A549 (cell line): ENCODE measurements at regions of chr10 and their contacts with region 1.

Region 1: DNA sequence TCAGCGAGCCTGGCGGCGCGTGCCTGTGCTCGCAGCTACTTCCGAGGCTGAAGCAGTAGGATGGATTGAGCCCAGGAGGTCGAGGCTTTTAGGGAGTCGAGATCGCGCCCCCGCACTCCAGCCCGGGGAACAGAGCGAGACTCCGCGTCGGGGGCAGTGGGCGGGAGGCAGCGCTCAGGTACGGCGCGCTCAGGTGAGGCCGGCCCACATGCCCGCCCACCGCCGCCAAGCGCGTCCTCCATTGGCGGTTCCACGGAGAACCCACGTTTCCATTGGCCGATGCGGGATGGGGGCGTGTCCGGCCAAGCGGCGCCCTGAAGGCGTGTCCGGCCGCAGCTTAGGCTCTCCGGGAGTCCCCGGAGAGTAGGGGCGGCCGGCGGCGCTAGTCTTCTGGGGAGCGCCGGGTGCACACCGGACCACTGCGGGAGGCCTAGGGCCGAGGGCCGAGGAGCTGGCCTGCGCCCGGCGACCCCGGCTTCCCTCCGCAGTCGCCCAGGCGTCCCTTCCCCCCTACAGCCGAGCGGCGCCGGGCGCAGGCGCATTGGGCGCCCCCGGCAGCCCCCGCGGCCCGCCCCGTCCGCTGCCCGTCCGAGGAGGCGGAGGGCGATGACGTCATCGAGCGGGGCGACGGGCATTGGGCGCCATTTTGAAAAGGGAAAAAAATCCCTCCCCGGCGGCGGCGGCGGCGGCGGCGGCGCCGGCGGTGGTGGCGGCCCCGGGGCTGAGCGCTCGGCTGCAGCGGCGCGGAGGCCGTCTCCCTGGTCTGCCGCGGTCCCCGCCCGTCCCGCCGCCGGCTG is at the start of gene PPP2R2D:
- DNase-seq: peak; percentile 92 to 93
- ATAC-seq: peak; percentile 89 to 97
- H3K4me3 ChIP-seq: peak within 1 kb of the TSS; percentile 98
- H3K27ac ChIP-seq: peak within 1 kb of the TSS; percentile 97 to 98
- H3K4me1 ChIP-seq: peaks cover 38% of the 10 kb centered on the region
- CTCF ChIP-seq: no peak
- EP300 ChIP-seq: no peak
- POLR2A ChIP-seq: peak; percentile 44
- RAD21 ChIP-seq: no peak
- polyA plus RNA-seq, gene PPP2R2D: 31.1 and 36.0 TPM in 2 replicates

Region 2: GRCh38 chr10:131885391-131886161 is 15.0 kb before region 1 on chr10:
- CTCF ChIA-PET with region 1: interaction called, 56 read pairs
- POLR2A ChIA-PET with region 1: interaction called, 4 read pairs
- DNase-seq: peak; percentile 76 to 84
- ATAC-seq: peak; percentile 91 to 99
- H3K4me3 ChIP-seq: no peak overlapping the region
- H3K27ac ChIP-seq: no peak overlapping the region
- H3K4me1 ChIP-seq: peaks cover 5% of the 10 kb centered on the region; the same call in 1 of the 3 replicates
- CTCF ChIP-seq: peak; percentile 94
- EP300 ChIP-seq: no peak
- POLR2A ChIP-seq: no peak
- RAD21 ChIP-seq: peak; percentile 88 to 89